ENCODE measurements at regions of chr17 and their contacts with region 1.

Region 1: GRCh38 chr17:36591434-36592315 is at the start of gene DHRS11:
- DNase-seq: peak; percentile 83
- H3K4me3 Mint-ChIP-seq: peak within 1 kb of the TSS; percentile 71
- H3K27ac Mint-ChIP-seq: peak within 1 kb of the TSS; percentile 50
- H3K4me1 Mint-ChIP-seq: peaks cover 23% of the 10 kb centered on the region
- H3K27me3 Mint-ChIP-seq: no peaks in the 10 kb centered on the region
- total RNA-seq, gene DHRS11: 8.4 to 9.8 TPM

Region 2: GRCh38 chr17:36545465-36546417 is 45.9 kb before region 1 on chr17:
- CTCF ChIA-PET with region 1: no interaction called
- intact Hi-C with region 1: loop called (anchors 1 kb)
- DNase-seq: peak; percentile 98
- H3K4me3 Mint-ChIP-seq: peak overlapping the region; percentile 86
- H3K27ac Mint-ChIP-seq: peak overlapping the region; percentile 94
- H3K4me1 Mint-ChIP-seq: peaks cover 44% of the 10 kb centered on the region
- H3K27me3 Mint-ChIP-seq: no peaks in the 10 kb centered on the region